GM10248 (cell line): ENCODE measurements at regions of chr1 and their contacts with region 1.

Region 1: DNA sequence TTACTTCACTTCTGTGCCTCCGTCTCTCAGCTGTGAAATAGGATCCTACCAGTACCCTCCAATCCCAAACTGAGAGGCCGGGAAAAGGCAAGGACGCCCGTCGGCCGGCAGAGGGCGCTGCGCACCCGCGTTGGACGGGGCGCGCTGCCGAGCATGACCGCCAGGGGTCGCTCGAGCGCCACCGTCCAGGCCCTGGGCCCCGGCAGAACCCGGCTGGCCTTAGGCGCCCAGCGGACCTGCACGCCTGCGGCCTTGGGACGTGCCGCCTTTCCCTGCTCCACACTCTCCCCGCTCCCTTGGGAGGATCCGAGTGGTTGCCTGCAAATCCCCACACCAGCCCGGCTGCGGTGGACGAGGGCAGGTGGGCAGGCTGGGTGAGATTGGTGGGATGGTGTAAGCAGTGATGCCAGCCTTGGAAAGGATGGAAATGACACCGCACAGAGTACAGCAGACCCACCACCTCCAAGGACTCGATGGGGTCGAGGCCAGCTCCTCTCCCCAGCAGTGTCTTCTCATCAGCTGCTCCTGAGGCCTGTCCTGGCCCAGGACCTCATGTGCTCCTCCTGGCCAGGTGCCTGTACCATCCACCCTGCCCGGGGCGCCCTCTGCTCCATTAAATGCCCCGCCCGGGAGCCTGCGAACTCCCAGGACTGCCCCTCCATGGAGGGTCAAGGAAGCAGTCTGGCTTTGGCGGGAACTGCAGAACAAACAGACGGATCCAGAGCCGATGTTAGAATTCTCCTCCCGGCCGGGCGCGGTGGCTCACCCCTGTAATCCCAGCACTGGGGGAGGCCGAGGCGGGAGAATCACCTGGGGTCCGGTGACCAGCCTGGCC is 47.4 kb upstream of the LBR start:
- DNase-seq: peak; percentile 88
- CTCF ChIP-seq: peak; percentile 100

Region 2: GRCh38 chr1:225021037-225021436 is 454.2 kb before region 1 on chr1:
- CTCF ChIA-PET with region 1: no interaction called
- POLR2A ChIA-PET with region 1: no interaction called
- DNase-seq: no peak
- CTCF ChIP-seq: no peak

Region 3: DNA sequence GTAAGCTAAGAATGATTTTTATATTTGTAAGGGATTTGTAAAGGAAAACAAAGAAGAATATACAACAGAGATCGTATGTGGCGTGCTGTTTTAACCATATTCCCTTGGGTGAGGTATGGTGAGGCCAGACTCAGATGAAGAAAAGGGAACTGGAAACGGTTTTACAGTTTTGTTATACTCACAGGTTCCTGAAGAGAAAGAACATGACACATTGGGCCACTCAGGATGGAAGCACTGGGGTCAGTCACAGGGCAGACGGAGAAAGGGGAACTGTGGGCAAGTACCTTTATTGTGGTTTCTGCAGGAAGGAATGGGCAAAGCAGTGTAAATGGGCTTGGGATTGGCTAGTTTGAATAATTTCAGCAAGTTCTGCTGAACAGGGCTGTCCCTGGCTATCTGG is 224.8 kb before region 1 on chr1:
- CTCF ChIA-PET with region 1: no interaction called
- POLR2A ChIA-PET with region 1: no interaction called
- DNase-seq: peak; percentile 15
- CTCF ChIP-seq: no peak

Region 4: GRCh38 chr1:225441314-225442122 is 33.7 kb before region 1 on chr1:
- CTCF ChIA-PET with region 1: interaction called, 11 read pairs
- POLR2A ChIA-PET with region 1: no interaction called
- DNase-seq: no peak
- CTCF ChIP-seq: peak; percentile 29

Region 5: GRCh38 chr1:225772323-225772768 is 297.1 kb after region 1 on chr1:
- CTCF ChIA-PET with region 1: interaction called, 23 read pairs
- POLR2A ChIA-PET with region 1: no interaction called
- DNase-seq: peak; percentile 64
- CTCF ChIP-seq: peak; percentile 51

Region 6: GRCh38 chr1:225903623-225904022 is 428.4 kb after region 1 on chr1:
- CTCF ChIA-PET with region 1: interaction called, 26 read pairs
- POLR2A ChIA-PET with region 1: no interaction called
- DNase-seq: no peak
- CTCF ChIP-seq: no peak

Region 7: GRCh38 chr1:225987491-225988316 is 512.5 kb after region 1 on chr1:
- CTCF ChIA-PET with region 1: interaction called, 129 read pairs
- POLR2A ChIA-PET with region 1: no interaction called
- DNase-seq: no peak
- CTCF ChIP-seq: peak; percentile 60